ENCODE measurements at regions of chr20 and their contacts with region 1.

Region 1: DNA sequence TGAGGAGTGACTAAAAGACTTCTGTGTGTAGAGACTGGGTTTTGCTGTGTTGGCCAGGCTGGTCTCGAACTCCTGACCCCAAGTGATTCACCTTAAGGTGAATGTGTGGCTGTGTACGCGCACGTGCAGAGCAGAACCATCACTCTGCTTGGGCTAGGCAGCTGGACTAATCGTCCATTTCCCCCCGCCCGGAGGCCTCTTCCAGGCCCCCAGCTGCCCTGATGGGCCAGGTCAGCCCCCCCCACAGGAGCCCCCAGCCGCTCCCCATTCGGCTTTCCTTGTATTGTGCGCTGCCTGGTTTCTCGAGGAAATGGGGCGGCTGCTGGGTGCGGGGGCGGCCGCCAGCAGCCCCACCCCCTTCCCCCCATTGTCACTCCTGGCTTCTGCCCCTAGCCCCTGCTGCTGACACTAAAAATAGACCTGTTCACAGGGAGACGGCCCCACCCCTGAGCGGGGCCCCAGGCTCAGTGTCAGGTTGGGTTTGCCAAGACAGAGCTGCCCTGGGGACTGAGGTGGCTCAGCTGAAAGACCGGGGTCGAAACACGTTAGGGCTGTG is 24.6 kb upstream of the CSNK2A1 start:
- DNase-seq: peak; percentile 73
- ATAC-seq: peak; percentile 81

Region 2: GRCh38 chr20:595330-596308 is 27.4 kb after region 1 on chr20:
- intact Hi-C with region 1: no loop called
- DNase-seq: peak; percentile 82
- ATAC-seq: peak; percentile 64

Region 3: DNA sequence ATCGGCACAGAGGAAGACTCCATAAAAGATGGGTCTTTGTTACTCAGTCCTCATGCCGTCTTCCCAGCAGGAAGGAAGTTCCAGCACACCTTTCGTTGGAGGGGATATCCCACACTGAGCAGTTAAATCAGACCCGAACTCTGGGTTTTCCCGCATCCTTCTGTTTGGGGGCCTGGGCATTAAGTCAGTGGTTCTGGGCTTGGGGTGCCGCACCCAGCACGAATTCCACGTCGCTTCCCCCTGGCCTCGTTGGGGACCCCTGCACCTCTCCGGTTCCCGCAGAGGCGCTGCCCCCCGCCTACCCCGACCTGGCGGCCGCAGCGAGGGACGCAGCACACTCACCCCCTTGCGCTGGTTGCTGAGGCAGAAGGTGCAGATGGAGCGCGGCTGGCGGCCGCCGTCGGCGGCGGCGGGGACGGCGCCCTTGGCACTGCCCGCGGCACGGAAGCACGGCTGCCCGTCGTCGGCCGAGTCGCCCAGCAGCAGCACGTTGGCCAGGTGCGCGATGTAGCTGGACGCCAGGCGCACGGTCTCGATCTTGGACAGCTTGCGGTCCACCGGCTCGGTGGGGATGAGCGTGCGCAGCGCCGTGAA is 41.3 kb after region 1 on chr20:
- intact Hi-C with region 1: loop called (anchors 5 kb)
- DNase-seq: no peak
- ATAC-seq: no peak